CD8-positive, alpha-beta memory T cell (primary cell): ENCODE measurements at regions of chr17 and their contacts with region 1.

Region 1: DNA sequence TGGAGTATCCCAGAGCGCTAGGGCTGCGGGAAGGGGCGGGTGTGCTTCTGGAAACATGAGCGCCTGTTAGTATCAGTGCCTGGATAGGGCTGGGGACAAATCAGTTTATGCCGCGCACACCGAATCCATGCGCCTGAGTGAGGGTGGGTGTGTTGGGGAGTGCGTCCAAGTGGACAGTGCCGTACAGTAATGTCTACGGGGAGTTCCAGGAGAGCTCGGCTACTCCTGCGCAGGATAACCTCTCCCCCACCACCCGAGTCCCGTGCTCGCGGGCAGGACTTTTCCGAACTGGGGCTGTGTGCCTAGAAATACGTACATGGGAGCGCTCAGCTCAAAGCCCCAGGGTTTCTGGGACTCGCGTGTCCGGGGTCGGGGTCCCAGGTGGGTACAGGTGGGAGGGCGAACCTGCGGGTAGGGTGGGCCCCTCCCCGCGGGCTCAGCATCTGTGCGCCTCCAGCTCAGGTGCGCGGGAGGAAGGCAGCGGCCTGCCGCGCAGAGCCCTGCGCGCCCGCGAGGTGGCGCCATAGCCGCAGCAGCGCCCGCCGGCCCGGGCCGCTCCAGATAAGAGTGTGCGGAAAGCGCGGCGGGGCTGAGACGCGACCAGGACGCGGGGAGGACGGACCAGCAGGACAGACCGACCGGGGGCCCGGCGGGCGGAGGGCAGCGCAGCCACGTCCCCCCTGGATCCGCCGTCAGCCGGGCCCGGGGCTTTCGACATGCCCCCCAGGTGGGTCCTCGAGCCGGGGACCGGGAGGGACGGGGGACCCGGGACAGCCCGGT is at the start of gene HIC1:
- DNase-seq: peak; percentile 68 to 84 (median 79)
- H3K4me3 ChIP-seq: peak within 1 kb of the TSS; percentile 64
- H3K4me3 Mint-ChIP-seq: peak within 1 kb of the TSS; percentile 79 to 92 (median 83)
- H3K27ac ChIP-seq: peak within 1 kb of the TSS; percentile 85
- H3K27ac Mint-ChIP-seq: peak within 1 kb of the TSS; percentile 85 to 97 (median 90)
- H3K4me1 ChIP-seq: peaks cover 18% of the 10 kb centered on the region
- H3K4me1 Mint-ChIP-seq: peaks cover 17 to 38% (median 18%) of the 10 kb centered on the region in 3 donors
- H3K27me3 ChIP-seq: no peaks in the 10 kb centered on the region
- H3K27me3 Mint-ChIP-seq: peaks cover 0 to 3% of the 10 kb centered on the region in 2 donors
- total RNA-seq, gene HIC1: 39.5 to 42.7 TPM

Region 2: GRCh38 chr17:2025622-2026310 is 28.9 kb before region 1 on chr17:
- CTCF ChIA-PET with region 1: interaction called, 13 read pairs
- POLR2A ChIA-PET with region 1: interaction called, 3 read pairs
- DNase-seq: peak in 1 of 5 donors; percentile 23
- H3K4me3 ChIP-seq: peak overlapping the region; percentile 31
- H3K4me3 Mint-ChIP-seq: peak overlapping the region; percentile 80 to 92 (median 85)
- H3K27ac ChIP-seq: no peak overlapping the region
- H3K27ac Mint-ChIP-seq: peak overlapping the region in 2 of 8 donors; percentile 23 to 43
- H3K4me1 ChIP-seq: peaks cover 31% of the 10 kb centered on the region
- H3K4me1 Mint-ChIP-seq: peaks cover 20 to 44% (median 24%) of the 10 kb centered on the region in 3 donors
- H3K27me3 ChIP-seq: peaks cover 16% of the 10 kb centered on the region
- H3K27me3 Mint-ChIP-seq: peaks cover 24 to 31% of the 10 kb centered on the region in 2 donors

Region 3: GRCh38 chr17:2090804-2091534 is 36.3 kb after region 1 on chr17:
- CTCF ChIA-PET with region 1: interaction called, 73 read pairs
- POLR2A ChIA-PET with region 1: interaction called, 4 read pairs
- DNase-seq: no peak
- H3K4me3 ChIP-seq: no peak overlapping the region
- H3K4me3 Mint-ChIP-seq: peak overlapping the region in 6 of 7 donors; percentile 22 to 97 (median 92)
- H3K27ac ChIP-seq: no peak overlapping the region
- H3K27ac Mint-ChIP-seq: peak overlapping the region; percentile 12 to 99 (median 96)
- H3K4me1 ChIP-seq: peaks cover 39% of the 10 kb centered on the region
- H3K4me1 Mint-ChIP-seq: peaks cover 43 to 67% (median 55%) of the 10 kb centered on the region in 3 donors
- H3K27me3 ChIP-seq: no peaks in the 10 kb centered on the region
- H3K27me3 Mint-ChIP-seq: no peaks in the 10 kb centered on the region

Region 4: DNA sequence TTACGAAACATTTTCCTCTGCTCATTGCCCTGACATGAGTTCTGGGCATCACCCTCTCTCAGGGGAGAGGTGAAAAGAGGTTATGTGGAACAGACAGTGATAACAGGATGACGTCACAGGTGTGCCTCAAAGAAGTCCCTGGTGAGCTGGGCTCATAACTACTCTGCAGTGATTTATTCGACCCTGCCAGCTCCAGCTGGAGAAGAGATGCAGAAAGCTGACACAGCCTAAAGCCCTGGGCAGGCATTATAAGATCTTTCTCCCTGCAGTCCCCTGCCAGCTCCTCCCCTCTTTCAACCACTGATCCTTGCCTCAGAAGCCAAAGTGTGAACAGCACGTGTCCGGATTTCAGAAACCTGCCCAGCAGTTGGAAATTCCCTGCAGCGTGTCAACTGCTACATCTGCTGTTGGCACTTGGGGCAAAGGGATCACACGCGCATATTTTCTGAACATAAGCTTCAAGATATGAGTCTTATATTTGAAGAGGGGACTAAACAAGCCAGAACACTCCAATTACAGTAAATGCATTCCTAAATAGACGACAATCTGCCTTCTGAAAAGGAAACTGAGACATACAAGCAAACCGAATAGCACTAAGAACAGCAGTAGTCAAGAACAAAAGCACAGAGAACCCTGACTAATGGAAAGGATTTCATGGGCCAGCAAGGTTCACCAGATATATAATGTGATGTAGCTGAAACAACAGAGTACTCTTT is 168.4 kb after region 1 on chr17:
- CTCF ChIA-PET with region 1: interaction called, 16 read pairs
- POLR2A ChIA-PET with region 1: no interaction called
- DNase-seq: peak; percentile 11 to 85 (median 71)
- H3K4me3 ChIP-seq: no peak overlapping the region
- H3K4me3 Mint-ChIP-seq: peak overlapping the region; percentile 29 to 85 (median 69)
- H3K27ac ChIP-seq: peak overlapping the region; percentile 22
- H3K27ac Mint-ChIP-seq: peak overlapping the region; percentile 83 to 95 (median 89)
- H3K4me1 ChIP-seq: peaks cover 20% of the 10 kb centered on the region
- H3K4me1 Mint-ChIP-seq: peaks cover 32 to 53% (median 51%) of the 10 kb centered on the region in 3 donors
- H3K27me3 ChIP-seq: no peaks in the 10 kb centered on the region
- H3K27me3 Mint-ChIP-seq: no peaks in the 10 kb centered on the region

Region 5: GRCh38 chr17:2266045-2266864 is 211.6 kb after region 1 on chr17:
- CTCF ChIA-PET with region 1: interaction called, 154 read pairs
- POLR2A ChIA-PET with region 1: interaction called, 14 read pairs
- DNase-seq: peak; percentile 76 to 94 (median 92)
- H3K4me3 ChIP-seq: peak overlapping the region; percentile 52
- H3K4me3 Mint-ChIP-seq: peak overlapping the region; percentile 61 to 92 (median 85)
- H3K27ac ChIP-seq: peak overlapping the region; percentile 64
- H3K27ac Mint-ChIP-seq: peak overlapping the region; percentile 96 to 100 (median 98)
- H3K4me1 ChIP-seq: peaks cover 77% of the 10 kb centered on the region
- H3K4me1 Mint-ChIP-seq: peaks cover 71 to 87% (median 84%) of the 10 kb centered on the region in 3 donors
- H3K27me3 ChIP-seq: no peaks in the 10 kb centered on the region
- H3K27me3 Mint-ChIP-seq: peaks cover 0 to 2% of the 10 kb centered on the region in 2 donors

Region 6: GRCh38 chr17:2351269-2351668 is 296.6 kb after region 1 on chr17:
- CTCF ChIA-PET with region 1: interaction called, 11 read pairs
- POLR2A ChIA-PET with region 1: no interaction called
- DNase-seq: no peak
- H3K4me3 ChIP-seq: no peak overlapping the region
- H3K4me3 Mint-ChIP-seq: no peak overlapping the region
- H3K27ac ChIP-seq: no peak overlapping the region
- H3K27ac Mint-ChIP-seq: no peak overlapping the region
- H3K4me1 ChIP-seq: peaks cover 19% of the 10 kb centered on the region
- H3K4me1 Mint-ChIP-seq: peaks cover 17 to 22% (median 18%) of the 10 kb centered on the region in 3 donors
- H3K27me3 ChIP-seq: no peaks in the 10 kb centered on the region
- H3K27me3 Mint-ChIP-seq: no peaks in the 10 kb centered on the region

Region 7: GRCh38 chr17:2755891-2756724 is 701.4 kb after region 1 on chr17:
- CTCF ChIA-PET with region 1: no interaction called
- POLR2A ChIA-PET with region 1: no interaction called
- DNase-seq: no peak
- H3K4me3 ChIP-seq: no peak overlapping the region
- H3K4me3 Mint-ChIP-seq: peak overlapping the region in 1 of 7 donors; percentile 12
- H3K27ac ChIP-seq: no peak overlapping the region
- H3K27ac Mint-ChIP-seq: no peak overlapping the region
- H3K4me1 ChIP-seq: no peaks in the 10 kb centered on the region
- H3K4me1 Mint-ChIP-seq: peaks cover 0 to 13% (median 6%) of the 10 kb centered on the region in 3 donors
- H3K27me3 ChIP-seq: peaks cover 13% of the 10 kb centered on the region
- H3K27me3 Mint-ChIP-seq: peaks cover 48% of the 10 kb centered on the region in 2 donors